H1 (cell line): ENCODE measurements at regions of chr2 and their contacts with region 1.

Region 1: DNA sequence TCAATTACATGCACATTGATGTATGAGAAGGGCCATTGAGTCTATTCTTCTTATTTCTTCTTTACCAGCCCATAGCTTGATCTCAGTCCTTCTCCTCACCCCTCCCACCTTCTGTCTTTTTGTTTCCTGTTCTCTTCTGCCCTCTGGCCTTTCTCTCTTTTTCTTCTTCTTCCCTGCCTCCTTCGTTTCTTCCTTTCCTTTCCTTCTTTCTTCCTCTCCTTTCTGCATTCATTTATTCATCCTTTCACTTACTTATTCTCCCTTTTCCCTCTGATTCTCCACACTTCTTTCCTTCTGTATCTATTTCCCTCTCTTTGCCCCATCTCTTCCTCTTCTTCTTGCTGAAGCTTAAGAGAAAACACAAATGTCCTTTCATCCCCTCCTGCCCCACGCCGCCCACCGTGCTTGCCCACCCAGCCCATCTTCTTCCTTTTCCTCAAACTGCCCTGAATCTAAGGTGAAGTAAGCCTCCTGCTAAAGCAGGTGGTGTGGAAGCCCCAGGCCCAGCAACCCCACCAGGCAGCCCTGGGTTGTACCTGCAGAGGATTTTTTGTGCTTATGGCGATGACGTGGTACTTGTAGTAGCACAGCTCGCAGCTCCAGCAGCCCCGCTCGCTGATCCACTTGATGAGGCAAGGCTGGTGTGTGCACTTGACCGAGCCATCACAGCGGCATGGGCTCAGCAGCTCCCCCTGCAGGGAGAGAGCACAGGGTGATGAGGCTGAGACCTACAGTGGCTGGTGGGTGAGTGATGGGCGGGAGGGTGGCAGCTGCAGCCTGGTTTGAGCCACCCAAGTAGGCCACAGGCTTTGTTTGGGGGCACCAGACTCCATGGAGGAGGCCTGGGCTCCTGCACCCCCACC is 89.0 kb downstream of the MARCHF4 start:
- DNase-seq: peak; percentile 83 to 95
- H3K4me3 ChIP-seq: no peak overlapping the region
- H3K27ac ChIP-seq: no peak overlapping the region
- H3K4me1 ChIP-seq: peaks cover 11 to 38% (median 18%) of the 10 kb centered on the region in 4 experiments
- H3K27me3 ChIP-seq: no peaks in the 10 kb centered on the region
- CTCF ChIP-seq: peak; percentile 88 to 100 (median 99)
- EP300 ChIP-seq: no peak
- POLR2A ChIP-seq: no peak
- RAD21 ChIP-seq: peak; percentile 76 to 83

Region 2: GRCh38 chr2:216235462-216235861 is 47.8 kb before region 1 on chr2:
- CTCF ChIA-PET with region 1: interaction called, 10 read pairs
- POLR2A ChIA-PET with region 1: no interaction called
- DNase-seq: no peak
- H3K4me3 ChIP-seq: no peak overlapping the region
- H3K27ac ChIP-seq: no peak overlapping the region
- H3K4me1 ChIP-seq: no peaks in the 10 kb centered on the region
- H3K27me3 ChIP-seq: no peaks in the 10 kb centered on the region
- CTCF ChIP-seq: no peak
- EP300 ChIP-seq: no peak
- POLR2A ChIP-seq: no peak
- RAD21 ChIP-seq: no peak

Region 3: GRCh38 chr2:216299598-216299997 is 16.3 kb after region 1 on chr2:
- CTCF ChIA-PET with region 1: interaction called, 40 read pairs
- POLR2A ChIA-PET with region 1: interaction called, 8 read pairs
- DNase-seq: no peak
- H3K4me3 ChIP-seq: no peak overlapping the region
- H3K27ac ChIP-seq: no peak overlapping the region
- H3K4me1 ChIP-seq: peaks cover 0 to 16% (median 10%) of the 10 kb centered on the region in 4 experiments; a peak in 5 of 7 replicates
- H3K27me3 ChIP-seq: 0 out of 7 replicates have a peak, but pooled peaks cover 0 to 3% (median 0%) of the 10 kb centered on the region in 4 experiments
- CTCF ChIP-seq: no peak
- EP300 ChIP-seq: no peak
- POLR2A ChIP-seq: no peak
- RAD21 ChIP-seq: no peak

Region 4: DNA sequence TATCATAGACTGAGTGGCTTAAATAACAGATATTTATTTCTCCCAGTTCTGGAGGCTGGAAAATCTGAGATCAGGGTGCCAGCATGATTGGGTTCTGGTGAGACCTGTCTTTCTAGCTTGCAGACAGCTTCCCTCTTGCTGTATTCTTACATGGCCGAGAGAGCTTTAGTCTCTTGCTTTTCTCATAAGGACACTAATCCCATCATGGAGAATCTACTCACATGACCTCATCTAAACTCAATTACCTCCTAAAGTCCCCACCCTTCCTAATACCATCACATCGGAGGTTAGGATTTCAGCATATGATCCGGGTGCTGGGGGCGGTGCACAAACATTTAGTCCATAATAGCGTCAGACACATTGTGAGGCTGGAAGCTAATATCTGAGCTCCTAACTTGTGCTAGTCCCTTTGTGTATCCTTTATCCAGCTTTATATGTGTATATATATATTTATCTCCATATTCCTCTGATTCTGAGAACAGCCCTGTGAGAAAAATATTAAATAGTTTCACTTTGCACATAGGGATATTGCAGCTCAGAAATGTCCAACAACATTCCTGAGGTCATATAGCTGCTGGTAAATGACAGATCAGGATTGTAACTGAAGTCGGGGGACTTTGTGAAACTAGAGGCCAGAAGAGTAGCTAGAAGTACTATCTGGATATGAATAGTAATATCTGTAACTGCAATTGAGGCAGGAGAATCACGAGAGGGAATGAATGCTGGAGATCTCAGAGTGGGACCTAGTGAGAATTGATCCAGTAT is 60.1 kb after region 1 on chr2:
- CTCF ChIA-PET with region 1: interaction called, 10 read pairs
- POLR2A ChIA-PET with region 1: no interaction called
- DNase-seq: no peak
- H3K4me3 ChIP-seq: no peak overlapping the region
- H3K27ac ChIP-seq: no peak overlapping the region
- H3K4me1 ChIP-seq: peaks cover 11 to 39% (median 32%) of the 10 kb centered on the region in 4 experiments
- H3K27me3 ChIP-seq: no peaks in the 10 kb centered on the region
- CTCF ChIP-seq: no peak
- EP300 ChIP-seq: no peak
- POLR2A ChIP-seq: no peak
- RAD21 ChIP-seq: no peak